ENCODE measurements at regions of chr1 and their contacts with region 1.

Region 1: DNA sequence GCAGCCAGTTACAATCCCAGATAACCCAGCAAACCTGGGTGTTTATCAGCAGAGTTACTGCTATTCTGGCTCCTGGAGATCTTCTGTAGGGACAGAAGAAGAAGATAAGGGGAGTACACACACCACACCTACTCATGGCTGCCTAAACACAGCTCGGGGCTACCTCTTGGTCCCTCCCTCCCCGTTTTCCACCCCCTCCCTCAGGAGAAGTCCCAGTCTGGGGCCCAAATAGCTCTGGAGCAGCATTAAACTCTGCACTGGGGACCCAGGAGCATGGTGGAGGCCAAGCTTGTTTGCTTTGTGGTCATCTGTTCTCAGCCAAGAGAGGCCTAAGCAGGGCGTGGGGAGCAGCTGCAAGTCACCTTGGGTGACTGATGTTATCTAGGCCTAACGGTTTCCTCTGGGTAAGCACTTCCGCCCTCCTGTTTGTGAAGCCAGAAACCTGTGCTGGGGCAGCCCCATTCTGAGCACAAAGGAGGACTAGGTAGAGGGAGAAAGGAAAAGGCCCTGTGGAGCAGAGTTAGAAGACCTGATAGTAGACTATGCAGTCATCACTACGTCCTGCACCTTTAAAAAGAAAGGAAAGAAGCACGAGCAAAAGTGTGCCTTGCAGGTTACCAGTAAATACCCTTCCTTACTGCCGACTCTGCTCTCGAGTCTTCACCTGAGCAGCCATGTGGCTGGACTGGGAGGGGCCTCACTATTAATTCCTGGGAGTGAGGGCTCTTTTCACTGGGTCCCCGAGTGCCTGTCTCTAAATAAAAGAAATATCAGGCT is 2.0 kb upstream of the RCSD1 start:
- DNase-seq: peak; percentile 78 to 95 (median 81)
- H3K4me3 ChIP-seq: peak overlapping the region; percentile 74 to 82
- H3K4me3 Mint-ChIP-seq: peak overlapping the region; percentile 90 to 99 (median 94)
- H3K27ac ChIP-seq: peak overlapping the region; percentile 90
- H3K27ac Mint-ChIP-seq: peak overlapping the region; percentile 94 to 99 (median 96)
- H3K4me1 ChIP-seq: peaks cover 56% of the 10 kb centered on the region
- H3K4me1 Mint-ChIP-seq: peaks cover 46 to 81% (median 54%) of the 10 kb centered on the region in 4 donors
- H3K27me3 ChIP-seq: no peaks in the 10 kb centered on the region
- H3K27me3 Mint-ChIP-seq: no peaks in the 10 kb centered on the region

Region 2: DNA sequence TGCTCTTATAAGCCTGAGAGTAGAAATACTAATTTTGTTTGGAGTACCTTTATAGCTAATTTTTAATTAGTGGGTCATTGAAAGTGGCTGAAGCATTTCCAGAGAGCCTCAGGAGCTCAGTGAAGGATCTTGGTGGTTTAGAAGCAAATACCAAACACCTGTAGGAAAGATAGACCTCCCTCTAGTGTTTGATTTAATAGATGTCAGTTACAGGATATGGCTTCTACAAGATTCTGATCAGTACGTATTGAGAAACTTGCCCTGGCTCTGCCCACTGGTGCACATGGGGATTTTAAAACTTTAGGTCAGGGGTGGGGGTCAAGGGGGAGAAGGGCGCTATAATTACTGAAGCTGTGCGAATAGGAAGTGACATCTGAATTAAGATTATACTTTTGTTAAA is 285.2 kb before region 1 on chr1:
- CTCF ChIA-PET with region 1: no interaction called
- POLR2A ChIA-PET with region 1: no interaction called
- intact Hi-C with region 1: no loop called
- DNase-seq: peak in 3 of 5 donors; percentile 1 to 14 (median 4)
- H3K4me3 ChIP-seq: no peak overlapping the region
- H3K4me3 Mint-ChIP-seq: no peak overlapping the region
- H3K27ac ChIP-seq: no peak overlapping the region
- H3K27ac Mint-ChIP-seq: peak overlapping the region in 2 of 7 donors; percentile 25 to 26
- H3K4me1 ChIP-seq: no peaks in the 10 kb centered on the region
- H3K4me1 Mint-ChIP-seq: peaks cover 4 to 11% (median 5%) of the 10 kb centered on the region in 4 donors
- H3K27me3 ChIP-seq: no peaks in the 10 kb centered on the region
- H3K27me3 Mint-ChIP-seq: no peaks in the 10 kb centered on the region

Region 3: DNA sequence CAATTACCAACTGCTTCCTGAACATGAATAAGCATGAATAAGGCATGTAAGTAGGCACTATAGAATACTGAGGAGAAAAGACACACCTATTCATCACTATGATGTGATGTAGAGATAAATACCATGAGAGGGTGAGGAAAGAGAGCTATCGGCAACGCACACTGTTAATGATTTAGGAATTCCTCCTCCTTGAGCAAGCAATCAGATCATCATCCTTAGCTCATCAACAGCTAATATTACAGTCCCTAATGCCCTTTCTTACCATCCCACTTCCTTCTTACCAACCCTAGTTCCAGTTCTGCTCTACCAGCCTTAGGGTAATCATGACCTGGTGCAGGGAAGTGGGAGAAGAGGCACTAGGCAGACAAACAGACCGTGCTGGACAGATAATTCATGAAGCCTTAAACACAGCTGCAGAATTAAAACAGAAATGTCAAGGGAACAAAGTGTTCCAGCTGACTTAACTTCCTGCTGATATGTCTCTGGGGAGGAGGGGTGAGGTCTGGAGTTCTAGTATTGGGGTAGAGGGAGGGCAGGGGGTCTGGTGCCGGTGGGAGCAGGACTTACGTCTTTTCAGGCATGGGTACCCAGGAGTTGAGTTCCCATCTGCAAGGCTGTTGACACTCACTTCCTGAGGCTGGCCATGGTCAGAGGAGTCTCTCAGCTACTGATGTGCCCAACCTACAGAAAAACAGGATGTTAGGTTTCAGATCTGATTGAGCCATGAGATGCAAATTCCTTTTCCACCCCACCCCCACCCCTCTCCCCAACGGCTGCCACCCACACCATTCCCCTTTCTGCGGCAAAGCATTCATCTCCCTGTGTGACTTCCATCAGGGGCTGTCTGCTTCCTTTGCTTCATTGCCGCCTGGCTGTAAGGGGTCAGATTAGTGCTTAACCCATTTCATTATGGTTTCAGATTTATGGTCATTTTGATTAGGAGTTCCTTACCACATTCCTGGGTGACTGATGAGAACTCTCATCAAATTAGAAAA is 10.6 kb before region 1 on chr1:
- CTCF ChIA-PET with region 1: interaction called, 18 read pairs
- POLR2A ChIA-PET with region 1: interaction called, 178 read pairs
- intact Hi-C with region 1: loop called (anchors 1 kb)
- DNase-seq: no peak
- H3K4me3 ChIP-seq: peak overlapping the region in 1 of 2 donors; percentile 29
- H3K4me3 Mint-ChIP-seq: peak overlapping the region; percentile 55 to 90 (median 80)
- H3K27ac ChIP-seq: peak overlapping the region; percentile 35
- H3K27ac Mint-ChIP-seq: peak overlapping the region; percentile 77 to 93 (median 88)
- H3K4me1 ChIP-seq: peaks cover 60% of the 10 kb centered on the region
- H3K4me1 Mint-ChIP-seq: peaks cover 44 to 75% (median 59%) of the 10 kb centered on the region in 4 donors
- H3K27me3 ChIP-seq: no peaks in the 10 kb centered on the region
- H3K27me3 Mint-ChIP-seq: no peaks in the 10 kb centered on the region

Region 4: GRCh38 chr1:167641786-167642500 is 13.9 kb after region 1 on chr1:
- CTCF ChIA-PET with region 1: interaction called, 28 read pairs
- POLR2A ChIA-PET with region 1: interaction called, 73 read pairs
- intact Hi-C with region 1: loop called (anchors 1 kb)
- DNase-seq: peak in 4 of 5 donors; percentile 33 to 69 (median 51)
- H3K4me3 ChIP-seq: no peak overlapping the region
- H3K4me3 Mint-ChIP-seq: peak overlapping the region; percentile 43 to 81 (median 58)
- H3K27ac ChIP-seq: peak overlapping the region; percentile 39
- H3K27ac Mint-ChIP-seq: peak overlapping the region; percentile 53 to 91 (median 85)
- H3K4me1 ChIP-seq: peaks cover 99% of the 10 kb centered on the region
- H3K4me1 Mint-ChIP-seq: peaks cover 68 to 100% (median 90%) of the 10 kb centered on the region in 4 donors
- H3K27me3 ChIP-seq: no peaks in the 10 kb centered on the region
- H3K27me3 Mint-ChIP-seq: no peaks in the 10 kb centered on the region

Region 5: GRCh38 chr1:167650269-167651160 is 22.5 kb after region 1 on chr1:
- CTCF ChIA-PET with region 1: no interaction called
- POLR2A ChIA-PET with region 1: interaction called, 73 read pairs
- intact Hi-C with region 1: no loop called
- DNase-seq: no peak
- H3K4me3 ChIP-seq: peak overlapping the region in 1 of 2 donors; percentile 12
- H3K4me3 Mint-ChIP-seq: peak overlapping the region in 7 of 8 donors; percentile 63 to 87 (median 75)
- H3K27ac ChIP-seq: peak overlapping the region; percentile 55
- H3K27ac Mint-ChIP-seq: peak overlapping the region; percentile 87 to 95 (median 92)
- H3K4me1 ChIP-seq: peaks cover 98% of the 10 kb centered on the region
- H3K4me1 Mint-ChIP-seq: peaks cover 71 to 92% (median 84%) of the 10 kb centered on the region in 4 donors
- H3K27me3 ChIP-seq: no peaks in the 10 kb centered on the region
- H3K27me3 Mint-ChIP-seq: no peaks in the 10 kb centered on the region

Measured in CD4-positive, alpha-beta memory T cell (primary cell).